Activated CD8-positive, alpha-beta memory T cell treated with anti-CD3 and anti-CD28 coated beads, Interleukin-2, amount 10 ng/mL, durations not matched to agents 7 days and 5 days (primary cell): ENCODE measurements at regions of chr16 and their contacts with region 1.

Region 1: DNA sequence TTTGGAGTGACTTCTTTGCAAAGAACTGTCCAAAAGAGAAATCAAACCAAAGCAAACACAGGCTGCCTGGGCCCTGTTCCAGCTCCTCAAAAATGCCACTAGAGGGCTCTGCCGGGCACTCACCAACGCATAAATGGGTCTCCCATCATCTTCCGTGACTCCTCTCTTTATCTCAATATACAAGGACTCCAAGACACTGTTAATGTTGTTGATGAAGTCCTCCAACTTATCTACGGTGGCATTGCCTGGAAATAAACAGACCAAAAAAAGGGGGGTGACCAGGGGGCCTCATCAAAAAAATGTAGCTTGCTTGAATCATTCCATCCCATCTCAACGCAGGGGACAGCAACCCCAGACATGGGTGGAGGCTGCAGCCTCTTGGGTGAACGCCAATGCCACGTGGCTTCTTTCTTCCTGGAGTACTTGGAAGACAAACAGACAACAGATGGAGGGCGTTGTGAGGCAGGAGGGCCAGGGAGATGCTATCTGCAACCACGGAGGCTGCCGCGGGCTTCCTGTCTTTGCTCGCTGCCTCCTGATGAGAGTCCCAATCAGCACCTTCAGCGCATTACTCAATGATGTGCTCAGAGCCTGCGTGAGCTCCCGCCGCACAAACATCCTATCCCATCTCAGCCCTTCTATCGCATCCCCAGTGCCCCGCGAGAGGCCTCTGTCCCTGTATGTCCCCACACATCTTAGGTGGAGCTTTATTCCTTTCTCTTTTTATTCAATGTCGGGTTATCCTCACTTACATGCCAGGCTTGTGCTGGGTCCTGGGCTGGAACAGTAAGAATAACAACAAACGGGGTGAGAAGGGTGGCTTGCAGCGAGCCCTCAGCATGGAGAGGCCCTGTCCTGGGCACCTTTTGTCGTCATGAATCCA is 32.0 kb downstream of the KDM8 start:
- DNase-seq: peak; percentile 97
- ATAC-seq: peak; percentile 67
- H3K4me3 Mint-ChIP-seq: peak overlapping the region; percentile 62
- H3K27ac Mint-ChIP-seq: peak overlapping the region; percentile 94
- H3K4me1 Mint-ChIP-seq: peaks cover 88% of the 10 kb centered on the region
- H3K27me3 Mint-ChIP-seq: no peaks in the 10 kb centered on the region

Region 2: GRCh38 chr16:27203429-27204231 is 31.7 kb before region 1 on chr16 and contains the start of gene KDM8:
- CTCF ChIA-PET with region 1: interaction called, 41 read pairs
- DNase-seq: peak; percentile 100
- ATAC-seq: peak; percentile 94
- H3K4me3 Mint-ChIP-seq: peak within 1 kb of the TSS; percentile 95
- H3K27ac Mint-ChIP-seq: peak within 1 kb of the TSS; percentile 100
- H3K4me1 Mint-ChIP-seq: peaks cover 48% of the 10 kb centered on the region
- H3K27me3 Mint-ChIP-seq: no peaks in the 10 kb centered on the region
- total RNA-seq, gene KDM8: 14.8 to 18.2 TPM

Region 3: DNA sequence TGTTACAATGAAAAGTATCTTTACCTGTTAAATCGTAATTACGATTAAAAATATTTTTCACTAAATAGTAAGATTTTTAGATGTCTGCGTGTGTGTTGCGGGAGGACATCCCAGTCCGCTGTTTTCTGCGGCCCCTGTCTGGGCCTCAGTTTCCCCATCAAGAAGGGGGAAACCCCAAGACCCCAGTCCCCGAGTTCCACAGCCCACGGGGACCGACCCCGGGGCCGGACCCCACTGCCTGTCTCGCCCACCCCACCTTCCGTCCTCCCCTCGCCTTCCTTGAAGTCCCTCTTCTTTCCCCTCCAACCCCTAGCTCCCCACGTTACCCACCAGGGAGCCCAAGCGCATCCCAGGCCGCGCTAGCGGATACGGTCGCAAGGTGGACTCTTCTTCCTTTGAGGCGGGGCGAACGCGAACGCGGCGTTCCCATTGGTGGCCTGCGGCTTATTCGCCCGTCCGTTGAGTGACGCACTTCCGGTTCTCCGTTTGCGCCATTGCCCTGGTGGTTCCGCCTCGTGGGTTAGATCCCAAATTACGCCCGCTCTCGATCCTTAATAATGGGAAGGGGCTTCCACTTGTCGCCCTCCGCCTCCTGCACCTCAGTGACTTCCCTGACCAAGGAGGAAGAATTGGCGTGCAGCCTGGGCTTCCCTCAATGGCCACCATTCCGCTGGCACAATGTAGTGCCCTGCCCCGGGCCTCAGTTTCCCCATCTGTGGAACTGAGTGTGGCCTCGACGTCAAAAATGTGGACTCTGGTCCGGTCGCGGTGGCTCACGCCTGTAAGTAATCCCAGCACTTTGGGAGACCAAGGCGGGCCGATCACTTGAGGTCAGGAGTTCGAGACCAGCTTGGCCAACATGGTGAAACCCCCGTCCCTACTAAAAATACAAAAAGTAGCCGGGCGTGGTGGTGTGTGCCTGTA is 33.3 kb after region 1 on chr16 and contains the start of gene NSMCE1:
- CTCF ChIA-PET with region 1: interaction called, 33 read pairs
- DNase-seq: peak; percentile 98
- ATAC-seq: peak; percentile 100
- H3K4me3 Mint-ChIP-seq: peak within 1 kb of the TSS; percentile 83
- H3K27ac Mint-ChIP-seq: peak within 1 kb of the TSS; percentile 96
- H3K4me1 Mint-ChIP-seq: peaks cover 72% of the 10 kb centered on the region
- H3K27me3 Mint-ChIP-seq: no peaks in the 10 kb centered on the region
- total RNA-seq, gene NSMCE1: 75.9 to 94.0 TPM

Region 4: GRCh38 chr16:27321011-27321915 is 86.0 kb after region 1 on chr16:
- CTCF ChIA-PET with region 1: interaction called, 116 read pairs
- DNase-seq: no peak
- ATAC-seq: no peak
- H3K4me3 Mint-ChIP-seq: no peak overlapping the region
- H3K27ac Mint-ChIP-seq: no peak overlapping the region
- H3K4me1 Mint-ChIP-seq: peaks cover 86% of the 10 kb centered on the region
- H3K27me3 Mint-ChIP-seq: no peaks in the 10 kb centered on the region

Region 5: DNA sequence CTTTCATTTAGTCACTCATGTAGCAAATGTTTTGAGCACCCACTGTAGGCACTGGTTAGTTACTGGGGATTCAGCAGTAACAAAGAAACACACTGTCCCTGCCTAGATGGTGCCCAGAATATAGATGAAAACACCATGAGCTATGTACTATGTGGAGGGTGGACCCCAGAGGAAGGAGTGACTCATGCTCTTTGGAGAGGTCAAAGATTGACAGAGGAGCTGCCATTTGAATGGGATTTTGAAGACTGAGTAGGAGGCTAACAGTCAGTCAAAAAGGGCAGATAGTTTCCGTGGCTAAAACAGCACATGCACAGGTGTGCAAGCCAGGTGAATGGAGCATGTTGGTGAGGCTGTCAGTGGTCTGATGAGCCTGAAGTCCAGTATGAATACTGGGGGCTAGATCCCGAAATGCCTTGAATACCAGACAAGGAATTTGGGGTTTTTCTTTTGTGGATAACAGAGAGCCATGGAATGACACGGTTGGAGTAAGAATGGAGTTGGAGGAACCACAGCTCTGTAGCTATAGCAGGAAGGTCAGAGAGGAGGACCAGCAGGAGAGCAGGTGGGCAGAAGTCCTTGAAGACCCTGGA is 172.8 kb after region 1 on chr16:
- CTCF ChIA-PET with region 1: interaction called, 15 read pairs
- DNase-seq: peak; percentile 65
- ATAC-seq: peak; percentile 55
- H3K4me3 Mint-ChIP-seq: peak overlapping the region; percentile 67
- H3K27ac Mint-ChIP-seq: peak overlapping the region; percentile 89
- H3K4me1 Mint-ChIP-seq: peaks cover 78% of the 10 kb centered on the region
- H3K27me3 Mint-ChIP-seq: no peaks in the 10 kb centered on the region